ENCODE measurements at regions of chr6 and their contacts with region 1.

Region 1: GRCh38 chr6:90631046-90631445 is 44.2 kb upstream of the MAP3K7 start:
- DNase-seq: no peak
- H3K4me3 ChIP-seq: no peak overlapping the region
- H3K27ac ChIP-seq: no peak overlapping the region
- H3K4me1 ChIP-seq: no peaks in the 10 kb centered on the region
- H3K27me3 ChIP-seq: no peaks in the 10 kb centered on the region
- CTCF ChIP-seq: no peak; the same call in 1 of the 2 replicates

Region 2: GRCh38 chr6:90676516-90677300 is 45.7 kb after region 1 on chr6:
- CTCF ChIA-PET with region 1: no interaction called
- POLR2A ChIA-PET with region 1: no interaction called
- intact Hi-C with region 1: no loop called
- DNase-seq: no peak
- H3K4me3 ChIP-seq: no peak overlapping the region
- H3K27ac ChIP-seq: no peak overlapping the region
- H3K4me1 ChIP-seq: no peaks in the 10 kb centered on the region
- H3K27me3 ChIP-seq: peaks cover 14% of the 10 kb centered on the region; the same call in 1 of the 2 replicates
- CTCF ChIP-seq: no peak

Region 3: DNA sequence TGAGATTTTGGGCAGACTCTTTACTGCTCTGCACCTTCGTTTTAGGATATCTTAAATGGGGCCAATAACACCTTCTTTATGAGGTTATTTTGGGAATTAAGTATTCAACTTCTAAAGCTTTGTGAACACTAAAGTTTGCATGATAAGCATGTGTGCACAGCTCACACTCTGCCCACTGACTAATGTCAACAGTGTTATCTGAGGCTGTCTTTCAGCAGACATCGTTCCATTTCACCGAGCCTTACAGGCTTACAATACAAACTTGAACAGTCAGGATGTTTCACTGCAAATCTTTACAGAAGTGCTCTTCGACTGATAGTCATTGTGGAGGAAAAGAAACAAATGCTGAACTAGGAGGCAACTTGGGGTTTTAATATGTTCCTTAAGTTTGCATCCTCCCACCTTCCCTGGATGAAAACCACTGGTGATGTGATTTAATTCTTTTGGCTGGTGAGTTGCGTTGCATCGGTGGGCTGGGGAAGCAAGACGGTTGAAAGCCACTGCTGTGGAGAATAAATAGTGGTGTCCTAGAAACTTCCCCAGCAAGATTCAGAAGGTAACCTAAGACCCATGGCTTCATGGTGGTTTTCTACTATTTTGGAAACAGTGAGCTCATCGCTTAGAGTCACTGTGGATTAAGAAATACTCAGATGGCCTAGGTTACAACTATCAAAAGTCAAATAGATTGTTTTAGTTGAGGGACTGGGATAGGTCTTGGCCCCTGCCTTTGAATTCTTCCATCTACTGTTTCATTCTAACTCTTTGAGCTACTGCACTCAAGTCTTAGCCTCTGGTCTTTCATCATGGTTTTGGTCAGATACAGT is 123.0 kb after region 1 on chr6:
- CTCF ChIA-PET with region 1: no interaction called
- POLR2A ChIA-PET with region 1: no interaction called
- intact Hi-C with region 1: no loop called
- DNase-seq: no peak
- H3K4me3 ChIP-seq: no peak overlapping the region
- H3K27ac ChIP-seq: no peak overlapping the region
- H3K4me1 ChIP-seq: no peaks in the 10 kb centered on the region
- H3K27me3 ChIP-seq: no peaks in the 10 kb centered on the region
- CTCF ChIP-seq: no peak

Region 4: DNA sequence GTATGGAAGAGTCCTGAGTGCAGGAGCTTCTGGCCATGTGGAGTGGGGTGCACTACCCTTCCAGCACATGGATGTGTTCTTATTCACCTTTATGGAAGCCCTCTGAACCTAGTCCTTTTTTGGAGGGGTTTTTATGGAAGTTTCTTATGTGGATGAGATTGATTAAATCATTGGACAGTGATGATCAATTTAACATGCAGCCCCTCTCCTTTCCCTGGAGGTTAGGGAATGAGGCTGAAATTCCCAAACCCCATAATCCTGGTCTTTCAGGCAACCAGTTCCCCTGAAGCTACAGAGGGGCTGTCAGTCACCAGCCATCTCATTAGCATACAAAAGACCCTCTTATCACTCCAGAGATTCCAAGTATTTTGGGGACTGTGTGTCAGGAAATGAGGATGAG is 139.7 kb after region 1 on chr6:
- CTCF ChIA-PET with region 1: no interaction called
- POLR2A ChIA-PET with region 1: no interaction called
- intact Hi-C with region 1: loop called (anchors 5 kb)
- DNase-seq: no peak
- H3K4me3 ChIP-seq: no peak overlapping the region
- H3K27ac ChIP-seq: no peak overlapping the region
- H3K4me1 ChIP-seq: no peaks in the 10 kb centered on the region
- H3K27me3 ChIP-seq: no peaks in the 10 kb centered on the region
- CTCF ChIP-seq: no peak

Measured in PC-9 (cell line).